ENCODE measurements at regions of chr9 and their contacts with region 1.

Region 1: GRCh38 chr9:120531683-120532300 is 48.2 kb downstream of the CDK5RAP2 start:
- DNase-seq: peak; percentile 81
- H3K4me3 Mint-ChIP-seq: peak overlapping the region; percentile 74
- H3K27ac Mint-ChIP-seq: peak overlapping the region; percentile 89
- H3K4me1 Mint-ChIP-seq: peaks cover 28% of the 10 kb centered on the region
- H3K27me3 Mint-ChIP-seq: no peaks in the 10 kb centered on the region
- CTCF ChIP-seq: peak; percentile 65

Region 2: DNA sequence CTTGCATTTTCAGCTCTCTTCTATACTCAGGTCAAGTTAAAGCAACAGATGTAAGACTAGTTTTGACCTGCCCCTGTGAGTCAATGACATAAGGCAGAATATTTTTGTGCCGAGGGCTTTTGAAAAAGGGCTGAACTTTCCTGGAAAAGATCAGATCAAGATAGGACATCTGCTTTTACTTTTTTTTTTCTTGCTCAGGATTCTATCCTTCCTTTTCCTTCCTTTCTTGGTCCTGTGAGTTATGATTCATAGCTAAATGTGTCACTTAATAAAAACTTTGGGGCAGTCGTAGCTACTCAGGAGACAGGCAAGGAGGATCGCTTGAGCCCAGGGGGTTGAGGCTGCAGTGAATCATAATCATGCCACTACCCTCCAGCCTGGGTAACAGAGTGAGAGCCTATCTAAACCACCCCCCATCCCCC is 1078.3 kb before region 1 on chr9:
- CTCF ChIA-PET with region 1: interaction called, 3 read pairs
- POLR2A ChIA-PET with region 1: no interaction called
- intact Hi-C with region 1: loop called (anchors 10 kb)
- DNase-seq: peak; percentile 66
- H3K4me3 Mint-ChIP-seq: peak overlapping the region; percentile 40
- H3K27ac Mint-ChIP-seq: peak overlapping the region; percentile 75
- H3K4me1 Mint-ChIP-seq: peaks cover 41% of the 10 kb centered on the region
- H3K27me3 Mint-ChIP-seq: no peaks in the 10 kb centered on the region
- CTCF ChIP-seq: no peak

Region 3: DNA sequence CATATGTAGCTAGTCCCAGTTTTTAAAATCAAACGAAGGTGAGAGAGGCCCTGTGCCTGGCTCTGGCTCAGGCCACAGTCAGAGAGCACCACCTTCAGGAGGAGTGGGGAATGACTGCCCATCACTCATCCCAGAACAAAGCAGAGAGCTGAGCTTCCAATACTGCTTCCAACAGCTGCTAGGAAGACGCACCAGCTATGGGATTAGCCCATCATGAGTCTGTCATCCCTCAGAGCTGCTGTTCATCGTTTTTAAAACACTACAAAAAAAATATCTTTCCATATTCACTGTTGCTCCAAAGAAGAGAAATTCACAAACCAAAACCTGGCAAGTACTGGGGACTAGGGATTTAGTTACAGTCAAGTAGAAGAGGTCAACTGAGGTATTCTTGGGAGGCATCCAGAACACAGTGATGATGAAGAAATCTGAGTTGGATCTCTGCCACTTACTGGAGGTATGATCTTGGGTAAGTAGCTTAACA is 54.2 kb before region 1 on chr9:
- CTCF ChIA-PET with region 1: interaction called, 19 read pairs
- POLR2A ChIA-PET with region 1: interaction called, 25 read pairs
- intact Hi-C with region 1: loop called (anchors 2 kb)
- DNase-seq: peak; percentile 97
- H3K4me3 Mint-ChIP-seq: no peak overlapping the region
- H3K27ac Mint-ChIP-seq: no peak overlapping the region
- H3K4me1 Mint-ChIP-seq: peaks cover 23% of the 10 kb centered on the region
- H3K27me3 Mint-ChIP-seq: no peaks in the 10 kb centered on the region
- CTCF ChIP-seq: peak; percentile 82

Region 4: DNA sequence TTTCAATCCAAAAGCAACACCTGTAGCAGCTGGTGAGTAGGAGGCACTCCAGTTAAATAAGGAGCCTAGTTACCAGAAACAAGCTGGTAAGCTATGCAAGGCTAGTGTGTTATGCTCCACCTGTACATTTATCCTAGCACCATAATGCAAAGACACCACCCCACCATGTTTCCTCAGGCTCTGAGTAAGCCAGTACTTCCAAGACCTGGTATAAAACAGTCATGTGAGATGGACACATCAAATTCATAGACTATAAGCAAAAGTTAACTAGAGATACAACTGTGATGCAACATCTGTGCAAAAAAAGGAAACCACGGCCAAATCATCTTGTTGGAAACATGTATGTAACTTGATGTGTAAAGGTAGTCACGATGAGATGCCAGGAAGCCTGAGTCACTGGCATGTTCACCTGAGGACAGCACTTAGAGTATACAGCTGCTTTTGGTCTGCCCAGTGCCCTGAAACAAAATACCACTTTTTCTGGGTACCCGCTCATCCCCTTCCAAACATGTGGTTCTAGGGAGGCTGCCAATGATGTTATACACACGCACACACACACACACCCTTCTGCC is 17.9 kb before region 1 on chr9:
- CTCF ChIA-PET with region 1: interaction called, 24 read pairs
- POLR2A ChIA-PET with region 1: interaction called, 9 read pairs
- intact Hi-C with region 1: no loop called
- DNase-seq: peak; percentile 31
- H3K4me3 Mint-ChIP-seq: no peak overlapping the region
- H3K27ac Mint-ChIP-seq: peak overlapping the region; percentile 91
- H3K4me1 Mint-ChIP-seq: peaks cover 17% of the 10 kb centered on the region
- H3K27me3 Mint-ChIP-seq: no peaks in the 10 kb centered on the region
- CTCF ChIP-seq: no peak

Region 5: DNA sequence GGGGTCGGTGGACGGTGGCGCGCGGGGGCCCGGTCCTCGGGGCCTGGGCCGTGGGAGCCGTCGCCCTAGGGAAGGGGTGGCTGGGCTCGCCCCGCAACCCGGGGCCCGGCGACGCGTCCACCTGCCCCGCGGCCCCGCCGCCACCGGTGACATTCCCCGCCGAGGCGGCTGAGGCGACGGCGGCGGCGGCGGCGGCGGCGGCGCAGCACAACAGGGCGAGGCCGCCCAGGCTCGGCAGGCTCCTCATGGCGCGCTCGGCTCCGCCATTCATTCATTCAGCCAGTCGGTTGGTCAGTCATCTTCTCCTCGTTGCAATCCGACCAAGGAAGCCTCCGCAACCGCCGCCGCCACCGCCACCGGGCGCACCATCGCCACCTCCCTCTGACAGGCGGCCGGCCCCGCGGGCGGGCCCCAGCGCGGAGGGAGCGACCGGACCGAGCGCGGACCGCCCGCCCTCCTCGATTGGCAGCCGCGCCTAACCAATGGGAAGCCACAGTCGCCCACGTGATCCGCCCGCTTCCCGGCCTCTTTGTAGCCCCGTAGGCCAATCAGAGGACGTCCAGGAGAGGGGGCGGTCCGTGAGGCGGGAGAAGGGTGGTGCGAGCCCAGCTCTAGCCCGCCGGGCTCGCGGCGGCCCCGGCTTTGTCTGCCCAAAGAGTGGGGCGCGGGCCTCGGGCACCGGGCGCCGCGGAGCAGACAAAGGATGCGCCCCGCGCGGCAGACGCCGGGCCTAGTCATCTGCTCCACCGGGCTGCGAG is 182.5 kb after region 1 on chr9 and contains the start of gene MEGF9:
- CTCF ChIA-PET with region 1: no interaction called
- POLR2A ChIA-PET with region 1: interaction called, 19 read pairs
- intact Hi-C with region 1: no loop called
- DNase-seq: peak; percentile 98
- H3K4me3 Mint-ChIP-seq: peak within 1 kb of the TSS; percentile 91
- H3K27ac Mint-ChIP-seq: peak within 1 kb of the TSS; percentile 95
- H3K4me1 Mint-ChIP-seq: peaks cover 20% of the 10 kb centered on the region
- H3K27me3 Mint-ChIP-seq: no peaks in the 10 kb centered on the region
- CTCF ChIP-seq: no peak
- total RNA-seq, gene MEGF9: 5.7 and 6.9 TPM in 2 replicates